CD4-positive, alpha-beta T cell (primary cell): ENCODE measurements at regions of chr11 and their contacts with region 1.

Region 1: DNA sequence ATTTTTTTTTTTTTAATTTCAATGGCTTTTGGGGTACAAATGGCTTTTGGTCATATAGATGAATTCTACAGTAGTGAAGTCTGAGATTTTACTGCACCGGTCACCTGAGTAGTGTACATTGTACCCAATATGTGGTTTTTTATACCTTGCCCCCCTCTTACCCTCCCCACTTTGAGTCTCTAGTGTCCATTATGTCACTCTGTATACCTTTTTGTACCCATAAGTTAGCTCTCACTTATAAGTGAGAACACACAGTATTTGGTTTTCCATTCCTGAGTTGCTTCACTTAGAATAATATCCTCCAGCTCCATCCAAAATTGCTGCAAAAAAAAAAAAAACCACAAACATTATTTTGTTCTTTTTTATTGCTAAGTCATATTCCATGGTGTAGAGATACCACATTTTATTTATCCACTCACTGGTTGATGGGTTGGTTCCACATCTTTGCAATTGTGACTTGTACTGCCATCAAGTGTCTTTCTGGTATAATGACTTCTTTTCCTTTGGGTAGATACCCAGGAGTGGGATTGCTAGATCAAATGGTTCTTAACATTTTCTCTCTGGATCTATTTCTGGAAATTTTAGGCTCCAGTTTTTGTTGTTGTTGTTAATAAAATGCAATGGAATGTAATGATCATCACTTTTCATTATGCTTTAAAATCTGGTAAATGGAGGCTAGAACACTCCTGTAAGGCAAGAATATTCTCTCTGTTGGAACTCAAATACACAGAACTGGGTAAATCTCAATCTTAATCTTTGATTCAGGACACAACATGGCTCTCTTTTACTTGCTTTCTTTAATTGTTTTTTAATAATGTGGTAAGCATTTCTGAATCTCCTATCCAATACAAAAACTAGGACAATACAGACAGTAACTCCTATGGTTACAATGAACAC is 10.3 kb downstream of the NEAT1 start:
- DNase-seq: peak in 3 of 14 experiments; percentile 75 to 78 (median 77)
- ATAC-seq: peak; percentile 45
- H3K4me3 ChIP-seq: no peak overlapping the region
- H3K4me3 Mint-ChIP-seq: peak overlapping the region; percentile 74
- H3K27ac ChIP-seq: peak overlapping the region in 1 of 2 donors; percentile 37
- H3K27ac Mint-ChIP-seq: peak overlapping the region; percentile 89
- H3K4me1 ChIP-seq: peaks cover 48% of the 10 kb centered on the region
- H3K4me1 Mint-ChIP-seq: peaks cover 90% of the 10 kb centered on the region
- H3K27me3 ChIP-seq: no peaks in the 10 kb centered on the region
- H3K27me3 Mint-ChIP-seq: no peaks in the 10 kb centered on the region
- CTCF ChIP-seq: peak; percentile 74

Region 2: DNA sequence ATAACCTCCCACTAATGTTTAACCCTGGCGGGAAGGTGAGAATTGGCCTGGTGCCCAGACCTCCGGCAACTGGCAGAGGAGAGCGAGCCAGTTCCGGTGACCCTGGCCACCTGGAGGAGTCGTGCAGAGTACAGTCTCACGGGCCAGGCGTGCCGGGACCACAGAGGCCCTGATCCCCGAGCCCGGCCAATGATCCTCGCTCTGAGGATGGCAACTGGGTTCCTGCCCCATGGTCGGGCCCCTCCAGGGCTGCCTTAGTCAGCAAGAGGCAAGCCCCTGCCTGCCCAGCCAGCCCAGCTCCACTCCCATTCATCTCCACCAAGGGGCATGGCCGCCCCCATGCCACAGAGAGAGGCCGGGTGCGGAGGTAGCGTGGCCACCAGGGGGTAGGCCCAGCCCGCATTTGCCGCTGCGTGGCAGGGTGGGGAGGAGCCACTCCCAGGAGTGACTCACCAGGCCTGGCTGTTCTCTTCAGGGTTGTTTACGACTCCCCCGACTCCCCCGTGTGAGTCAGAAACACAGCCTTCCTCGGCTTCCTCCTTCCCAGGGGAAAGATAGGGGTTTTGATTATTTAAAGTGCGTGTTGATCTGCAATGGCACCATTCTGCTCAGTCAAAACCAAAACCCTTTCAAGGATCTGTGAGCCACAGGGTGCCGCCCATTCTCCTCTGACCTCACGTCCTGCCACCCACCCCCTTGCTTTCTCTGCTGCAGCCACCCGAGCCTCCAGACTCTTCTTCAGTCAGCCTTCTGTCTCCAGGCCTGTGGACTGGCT is 50.7 kb before region 1 on chr11 and contains the start of gene SLC25A45:
- CTCF ChIA-PET with region 1: interaction called, 7 read pairs
- POLR2A ChIA-PET with region 1: interaction called, 9 read pairs
- intact Hi-C with region 1: loop called (anchors 1 to 2 kb)
- DNase-seq: peak; percentile 84 to 96 (median 92)
- ATAC-seq: peak; percentile 83
- H3K4me3 ChIP-seq: peak within 1 kb of the TSS; percentile 76
- H3K4me3 Mint-ChIP-seq: peak within 1 kb of the TSS; percentile 86
- H3K27ac ChIP-seq: peak within 1 kb of the TSS; percentile 94 to 95
- H3K27ac Mint-ChIP-seq: peak within 1 kb of the TSS; percentile 98
- H3K4me1 ChIP-seq: peaks cover 74% of the 10 kb centered on the region
- H3K4me1 Mint-ChIP-seq: peaks cover 57% of the 10 kb centered on the region
- H3K27me3 ChIP-seq: no peaks in the 10 kb centered on the region
- H3K27me3 Mint-ChIP-seq: no peaks in the 10 kb centered on the region
- CTCF ChIP-seq: peak; percentile 81
- total RNA-seq, gene SLC25A45: 40.0 to 40.8 TPM